HCT116 (cell line): ENCODE measurements at regions of chr3 and their contacts with region 1.

Region 1: DNA sequence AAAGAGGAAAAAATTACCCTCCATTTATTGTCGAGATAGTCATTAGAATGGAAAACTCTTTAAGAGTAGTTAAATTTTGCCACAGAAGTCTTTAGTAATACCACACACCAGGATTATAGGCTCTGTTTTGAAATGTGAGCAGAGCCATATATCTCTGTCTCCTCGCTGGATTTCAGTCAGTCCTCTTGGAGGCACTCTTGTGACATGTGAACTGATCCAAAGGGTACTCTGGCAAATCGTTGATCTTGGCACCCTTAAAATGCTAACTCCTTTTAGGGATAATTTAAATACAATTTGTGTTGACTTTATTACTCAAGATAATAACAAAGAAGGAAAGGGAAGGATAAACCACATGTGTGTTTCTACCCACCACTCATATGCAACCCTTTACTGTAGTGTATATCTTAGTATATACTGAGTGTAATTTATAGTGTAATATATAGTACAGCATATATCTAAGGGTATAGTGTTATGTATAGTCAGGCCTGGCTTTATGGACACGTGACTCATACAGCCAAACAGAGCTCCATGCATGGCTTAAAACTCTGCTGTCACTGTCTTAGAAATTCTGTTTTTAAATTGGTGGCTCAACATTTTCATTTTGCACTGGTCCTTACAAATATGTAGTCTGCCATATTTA is 12.3 kb upstream of the KPNA4 start:
- DNase-seq: peak; percentile 23
- ATAC-seq: peak; percentile 91
- H3K4me3 ChIP-seq: no peak overlapping the region
- H3K27ac ChIP-seq: no peak overlapping the region
- H3K4me1 ChIP-seq: no peaks in the 10 kb centered on the region
- H3K27me3 ChIP-seq: no peaks in the 10 kb centered on the region
- CTCF ChIP-seq: peak; percentile 44 to 61 (median 60); a peak in 5 of 6 replicates
- POLR2A ChIP-seq: no peak
- RAD21 ChIP-seq: peak; percentile 79

Region 2: GRCh38 chr3:160464321-160464720 is 113.4 kb before region 1 on chr3:
- CTCF ChIA-PET with region 1: no interaction called
- POLR2A ChIA-PET with region 1: no interaction called
- RAD21 ChIA-PET with region 1: no interaction called
- intact Hi-C with region 1: no loop called
- DNase-seq: no peak
- ATAC-seq: no peak
- H3K4me3 ChIP-seq: no peak overlapping the region
- H3K27ac ChIP-seq: no peak overlapping the region
- H3K4me1 ChIP-seq: no peaks in the 10 kb centered on the region
- H3K27me3 ChIP-seq: no peaks in the 10 kb centered on the region
- CTCF ChIP-seq: no peak
- POLR2A ChIP-seq: no peak
- RAD21 ChIP-seq: no peak

Region 3: GRCh38 chr3:160754855-160755747 is 177.4 kb after region 1 on chr3:
- CTCF ChIA-PET with region 1: no interaction called
- POLR2A ChIA-PET with region 1: no interaction called
- RAD21 ChIA-PET with region 1: no interaction called
- intact Hi-C with region 1: no loop called
- DNase-seq: peak; percentile 88
- ATAC-seq: peak; percentile 88
- H3K4me3 ChIP-seq: peak overlapping the region; percentile 70 to 95
- H3K27ac ChIP-seq: peak overlapping the region; percentile 80
- H3K4me1 ChIP-seq: peaks cover 4 to 15% of the 10 kb centered on the region in 2 experiments; a peak in 3 of 4 replicates
- H3K27me3 ChIP-seq: no peaks in the 10 kb centered on the region
- CTCF ChIP-seq: no peak
- POLR2A ChIP-seq: peak; percentile 75
- RAD21 ChIP-seq: no peak

Region 4: DNA sequence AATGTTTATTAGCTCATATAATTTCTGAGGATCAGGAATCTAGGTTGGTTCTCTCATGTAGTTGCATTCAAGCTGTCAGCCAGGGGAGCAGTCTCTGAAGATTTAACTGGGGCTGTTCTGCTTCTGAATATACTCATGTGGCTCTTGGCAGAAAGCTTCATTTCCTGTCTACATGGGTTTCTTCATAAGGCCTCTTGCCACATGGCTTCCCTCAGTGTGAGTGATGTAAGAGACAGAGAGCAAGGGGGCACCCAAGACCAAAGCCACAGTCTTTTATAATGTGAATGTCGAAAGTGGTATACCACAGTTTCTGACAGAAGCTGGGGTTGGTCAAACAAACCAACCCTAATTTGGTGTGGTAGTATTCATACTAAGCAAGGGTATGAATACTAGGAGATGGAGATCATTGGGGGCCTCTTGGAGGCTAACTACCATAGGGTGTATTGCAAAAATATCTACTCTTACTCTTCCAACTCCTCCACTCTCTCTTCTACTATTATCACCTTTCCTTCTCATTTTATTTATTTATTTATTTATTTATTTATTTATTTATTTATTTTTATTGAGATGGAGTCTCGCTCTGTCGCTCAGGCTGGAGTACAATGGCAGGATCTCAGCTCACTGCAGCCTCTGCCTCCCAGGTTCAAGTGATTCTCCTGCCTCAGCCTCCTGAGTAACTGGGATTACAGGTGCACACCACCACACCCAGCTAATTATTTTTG is 403.7 kb after region 1 on chr3:
- CTCF ChIA-PET with region 1: no interaction called
- POLR2A ChIA-PET with region 1: no interaction called
- RAD21 ChIA-PET with region 1: no interaction called
- intact Hi-C with region 1: no loop called
- DNase-seq: no peak
- ATAC-seq: no peak
- H3K4me3 ChIP-seq: no peak overlapping the region
- H3K27ac ChIP-seq: no peak overlapping the region
- H3K4me1 ChIP-seq: no peaks in the 10 kb centered on the region
- H3K27me3 ChIP-seq: no peaks in the 10 kb centered on the region
- CTCF ChIP-seq: no peak
- POLR2A ChIP-seq: no peak
- RAD21 ChIP-seq: no peak

Region 5: GRCh38 chr3:161220850-161221753 is 643.4 kb after region 1 on chr3 and contains the start of gene NMD3:
- CTCF ChIA-PET with region 1: no interaction called
- POLR2A ChIA-PET with region 1: no interaction called
- RAD21 ChIA-PET with region 1: no interaction called
- intact Hi-C with region 1: loop called (anchors 10 kb)
- DNase-seq: peak; percentile 87
- ATAC-seq: peak; percentile 96
- H3K4me3 ChIP-seq: peak within 1 kb of the TSS; percentile 88
- H3K27ac ChIP-seq: peak within 1 kb of the TSS; percentile 83
- H3K4me1 ChIP-seq: peaks cover 6 to 24% of the 10 kb centered on the region in 2 experiments
- H3K27me3 ChIP-seq: no peaks in the 10 kb centered on the region
- CTCF ChIP-seq: no peak
- POLR2A ChIP-seq: peak; percentile 61
- RAD21 ChIP-seq: no peak
- total RNA-seq, gene NMD3: 85.2 TPM